HCT116 (cell line): ENCODE measurements at regions of chr1 and their contacts with region 1.

Region 1: DNA sequence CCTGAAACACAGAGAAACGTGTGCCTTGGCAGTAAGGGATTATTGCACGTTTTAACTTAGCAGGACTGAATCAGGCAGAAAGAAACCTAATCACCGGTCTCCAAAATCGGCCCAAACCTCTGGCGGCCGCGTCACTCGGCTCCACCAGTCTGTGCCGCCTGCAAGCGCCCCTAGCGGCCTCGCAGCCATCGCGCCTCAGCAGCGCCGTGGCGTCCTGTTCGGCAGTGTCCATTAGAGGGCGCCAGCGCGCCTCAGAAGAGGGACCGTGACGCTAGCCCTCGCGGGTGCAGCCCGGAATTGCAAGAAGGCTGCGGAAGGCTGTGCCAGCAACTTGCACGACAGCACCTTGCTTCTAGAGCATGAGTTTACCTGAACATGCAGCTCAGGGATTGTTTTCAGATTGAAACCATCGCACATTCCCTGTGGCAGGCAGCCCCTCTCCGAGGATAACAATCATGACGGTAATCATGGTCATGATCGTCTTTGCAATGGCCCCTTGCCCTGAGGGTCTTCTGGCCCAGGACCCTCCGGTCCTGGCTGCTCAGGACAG is 164.4 kb downstream of the TRIM33 start:
- DNase-seq: peak; percentile 89
- ATAC-seq: peak; percentile 99
- H3K4me3 ChIP-seq: peak overlapping the region; percentile 30 to 47
- H3K27ac ChIP-seq: no peak overlapping the region
- H3K4me1 ChIP-seq: peaks cover 0 to 11% of the 10 kb centered on the region in 2 experiments; a peak in 1 of 4 replicates
- H3K27me3 ChIP-seq: no peaks in the 10 kb centered on the region
- CTCF ChIP-seq: peak; percentile 100
- POLR2A ChIP-seq: no peak
- RAD21 ChIP-seq: peak; percentile 99

Region 2: GRCh38 chr1:114558544-114558943 is 212.0 kb after region 1 on chr1:
- CTCF ChIA-PET with region 1: interaction called, 4 read pairs
- POLR2A ChIA-PET with region 1: no interaction called
- RAD21 ChIA-PET with region 1: no interaction called
- intact Hi-C with region 1: loop called (anchors 2 kb)
- DNase-seq: peak; percentile 6
- ATAC-seq: peak; percentile 55; the same call in 1 of the 2 replicates
- H3K4me3 ChIP-seq: no peak overlapping the region
- H3K27ac ChIP-seq: no peak overlapping the region
- H3K4me1 ChIP-seq: no peaks in the 10 kb centered on the region
- H3K27me3 ChIP-seq: no peaks in the 10 kb centered on the region
- CTCF ChIP-seq: peak; percentile 23 to 67 (median 51); a peak in 4 of 6 replicates
- POLR2A ChIP-seq: no peak
- RAD21 ChIP-seq: peak; percentile 65

Region 3: DNA sequence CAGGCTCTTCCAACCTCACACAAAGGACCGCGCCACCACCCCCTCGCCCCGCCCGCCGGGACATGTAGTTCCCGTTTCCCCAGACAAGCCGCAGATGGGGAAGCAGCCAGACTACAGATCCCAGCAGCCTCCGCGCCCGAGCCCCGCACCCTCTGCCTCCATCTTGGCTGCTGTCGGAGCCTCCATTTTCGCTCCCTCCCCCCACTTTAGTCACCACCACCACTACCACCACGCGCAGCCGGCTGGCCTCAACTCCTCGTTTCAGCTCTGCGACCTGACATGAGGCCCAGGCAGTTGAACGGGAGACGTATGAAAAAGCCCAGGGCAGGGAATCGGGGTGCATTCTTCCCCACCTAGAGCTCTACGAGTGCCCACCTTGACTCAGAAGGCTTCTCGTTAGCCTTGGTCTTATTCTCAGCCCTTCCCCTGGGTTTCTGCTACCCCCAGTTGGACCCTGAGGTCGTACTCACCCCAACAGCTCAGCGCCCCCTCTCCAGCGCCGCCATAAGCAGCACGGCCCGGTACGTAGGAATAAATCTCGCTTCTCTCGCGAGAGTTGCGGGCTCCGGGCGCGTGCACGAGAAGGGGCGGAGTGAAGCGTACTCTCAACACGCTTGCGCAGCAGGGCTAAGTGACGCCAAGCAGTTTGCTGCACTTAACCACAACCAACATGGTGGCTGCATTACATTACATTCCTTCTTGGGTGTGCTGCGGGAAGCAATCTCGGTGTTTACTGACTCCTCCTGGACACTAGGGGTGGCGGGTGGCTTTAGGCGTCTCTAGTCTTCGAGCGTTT is 411.1 kb after region 1 on chr1 and contains the start of gene CSDE1:
- CTCF ChIA-PET with region 1: no interaction called
- POLR2A ChIA-PET with region 1: no interaction called
- RAD21 ChIA-PET with region 1: no interaction called
- intact Hi-C with region 1: loop called (anchors 5 kb)
- DNase-seq: peak; percentile 98
- ATAC-seq: peak; percentile 89
- H3K4me3 ChIP-seq: peak within 1 kb of the TSS; percentile 80 to 97
- H3K27ac ChIP-seq: peak within 1 kb of the TSS; percentile 93
- H3K4me1 ChIP-seq: peaks cover 12 to 28% of the 10 kb centered on the region in 2 experiments
- H3K27me3 ChIP-seq: no peaks in the 10 kb centered on the region
- CTCF ChIP-seq: peak in 2 of 3 experiments; percentile 66 to 73; a peak in 4 of 6 replicates
- POLR2A ChIP-seq: peak; percentile 90
- RAD21 ChIP-seq: peak; percentile 42
- total RNA-seq, gene CSDE1: 515 TPM

Region 4: DNA sequence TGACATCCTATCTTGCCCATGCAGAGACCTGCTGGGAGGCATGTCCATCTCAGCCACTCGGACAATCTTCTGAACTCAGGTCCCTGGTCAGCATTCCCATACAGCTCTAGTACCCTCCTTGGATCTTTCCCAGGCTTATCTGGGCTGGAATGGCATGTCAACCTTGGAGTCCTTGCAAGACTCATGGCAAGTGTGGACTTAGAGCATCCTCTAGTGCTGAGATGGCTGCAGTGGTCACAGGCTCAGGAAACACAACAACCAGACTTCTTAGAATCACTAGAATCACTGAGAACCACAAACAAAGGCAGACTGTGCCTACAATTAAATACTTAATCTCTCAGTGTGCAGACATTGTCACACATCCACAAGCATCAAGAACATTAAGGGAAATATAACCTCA is 610.0 kb after region 1 on chr1:
- CTCF ChIA-PET with region 1: no interaction called
- POLR2A ChIA-PET with region 1: no interaction called
- RAD21 ChIA-PET with region 1: no interaction called
- intact Hi-C with region 1: loop called (anchors 2 kb)
- DNase-seq: peak; percentile 21
- ATAC-seq: peak; percentile 64
- H3K4me3 ChIP-seq: no peak overlapping the region
- H3K27ac ChIP-seq: no peak overlapping the region
- H3K4me1 ChIP-seq: no peaks in the 10 kb centered on the region
- H3K27me3 ChIP-seq: no peaks in the 10 kb centered on the region
- CTCF ChIP-seq: peak; percentile 24 to 53 (median 46); a peak in 5 of 6 replicates
- POLR2A ChIP-seq: no peak
- RAD21 ChIP-seq: peak; percentile 72

Region 5: DNA sequence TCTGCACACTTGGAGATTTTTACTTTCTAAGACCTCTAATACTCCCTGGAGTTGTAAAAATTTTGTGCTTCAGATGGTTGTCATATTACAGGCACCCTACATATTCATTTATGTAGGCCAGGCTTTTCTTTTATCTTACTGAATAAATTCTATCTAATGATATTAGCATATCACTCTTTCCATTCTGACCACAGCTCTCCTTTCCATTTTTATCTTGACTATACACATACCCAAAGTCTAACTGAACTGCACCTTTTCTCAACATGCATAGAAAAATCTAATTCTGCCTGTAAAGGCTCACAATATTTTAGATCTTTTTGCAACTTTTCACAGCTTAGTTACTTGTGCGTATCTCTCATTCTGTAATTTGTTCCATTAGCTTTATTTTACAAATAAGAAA is 630.3 kb after region 1 on chr1:
- CTCF ChIA-PET with region 1: no interaction called
- POLR2A ChIA-PET with region 1: no interaction called
- RAD21 ChIA-PET with region 1: no interaction called
- intact Hi-C with region 1: no loop called
- DNase-seq: no peak
- ATAC-seq: no peak
- H3K4me3 ChIP-seq: no peak overlapping the region
- H3K27ac ChIP-seq: no peak overlapping the region
- H3K4me1 ChIP-seq: no peaks in the 10 kb centered on the region
- H3K27me3 ChIP-seq: no peaks in the 10 kb centered on the region
- CTCF ChIP-seq: no peak
- POLR2A ChIP-seq: no peak
- RAD21 ChIP-seq: no peak